Right ventricle myocardium inferior (tissue), 1 donor: ENCODE measurements at regions of chr2 and their contacts with region 1.

Region 1: DNA sequence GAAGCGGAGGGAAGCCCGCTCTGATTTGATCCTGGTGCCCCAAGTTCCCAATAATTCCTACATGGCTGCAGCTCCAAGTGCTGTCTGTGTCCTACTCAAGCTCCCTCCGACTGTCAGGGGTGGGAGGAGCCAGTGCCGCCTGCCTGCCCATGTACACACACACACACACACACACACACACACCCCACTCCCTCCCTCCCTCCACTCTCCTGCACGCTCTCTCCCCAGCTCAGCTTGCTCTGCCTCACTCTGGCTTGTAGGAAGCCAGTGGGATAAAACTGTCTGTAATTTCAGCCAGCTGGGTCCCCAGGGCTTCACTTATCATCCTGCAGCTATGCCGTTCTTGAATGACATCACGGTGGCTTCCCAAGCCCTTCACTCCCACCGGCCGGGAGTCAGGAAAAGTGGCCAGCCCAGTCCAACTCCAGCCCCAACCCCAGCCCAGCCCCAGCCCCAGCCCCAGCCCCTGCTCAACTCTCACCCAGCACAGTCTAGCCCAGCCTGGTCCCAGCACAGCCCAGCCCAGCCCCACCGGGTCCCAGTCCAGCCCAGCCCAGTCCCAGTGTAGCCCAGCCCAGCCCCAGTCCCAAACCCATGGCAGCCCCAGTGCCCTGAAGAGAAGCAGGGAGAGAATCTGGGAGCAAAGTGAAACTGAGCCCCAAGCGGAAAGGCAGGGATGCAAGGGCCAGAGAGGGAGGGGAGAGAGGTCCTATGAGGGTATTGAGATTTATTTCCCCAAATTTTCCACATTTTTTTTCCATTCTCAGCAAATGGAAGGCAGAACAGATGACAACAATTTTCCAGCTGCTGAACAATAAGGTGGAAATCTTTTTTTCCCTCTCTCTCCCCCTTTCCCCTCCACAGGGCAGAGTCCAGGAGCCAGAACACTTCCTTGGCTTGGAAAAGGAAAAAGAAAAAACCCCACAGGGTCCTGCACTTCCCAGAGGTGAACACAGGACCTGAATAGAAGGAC is 144.0 kb downstream of the TNS1 start:
- DNase-seq: peak; percentile 89
- ATAC-seq: peak; percentile 82

Region 2: GRCh38 chr2:217804786-217805667 is 53.8 kb before region 1 on chr2:
- intact Hi-C with region 1: loop called (anchors 10 kb)
- DNase-seq: no peak
- ATAC-seq: peak; percentile 17

Region 3: DNA sequence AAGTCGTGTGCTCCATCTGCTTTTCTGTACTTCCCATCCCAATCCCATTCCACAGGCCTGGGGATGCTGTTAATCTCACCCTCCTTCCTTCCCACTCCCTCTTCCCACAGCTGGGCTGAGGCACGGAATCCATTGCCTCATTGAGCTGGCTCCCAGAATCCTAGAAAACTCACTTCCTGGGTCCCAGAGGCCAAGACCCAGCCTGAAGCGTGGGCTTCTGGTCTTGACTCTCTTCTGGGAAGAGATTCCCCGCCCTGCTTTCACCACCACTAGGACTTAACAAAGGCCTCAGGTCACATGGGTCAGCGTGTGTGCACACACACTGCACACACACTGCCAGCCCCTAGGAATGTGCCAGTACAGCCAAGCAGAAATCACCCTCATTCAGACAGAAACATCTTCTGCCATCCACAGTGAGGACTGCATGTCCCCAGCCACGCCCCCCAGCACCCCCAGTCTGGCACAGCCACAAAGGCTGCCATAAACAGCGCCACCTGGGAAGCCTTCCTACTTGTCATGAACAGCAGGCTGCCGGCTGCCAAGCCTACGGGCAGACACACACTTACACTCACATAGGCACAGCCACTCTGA is 21.8 kb before region 1 on chr2:
- intact Hi-C with region 1: loop called (anchors 2 kb)
- DNase-seq: peak; percentile 91
- ATAC-seq: peak; percentile 68